Right cardiac atrium (tissue), 5 donors: ENCODE measurements at regions of chr11 and their contacts with region 1.

Region 1: GRCh38 chr11:95764267-95764898 is 25.2 kb downstream of the FAM76B start:
- DNase-seq: no peak
- ATAC-seq: peak; percentile 61 to 63
- H3K4me3 ChIP-seq: no peak overlapping the region
- H3K27ac ChIP-seq: no peak overlapping the region
- H3K4me1 ChIP-seq: no peaks in the 10 kb centered on the region
- H3K27me3 ChIP-seq: peaks cover 2% of the 10 kb centered on the region

Region 2: DNA sequence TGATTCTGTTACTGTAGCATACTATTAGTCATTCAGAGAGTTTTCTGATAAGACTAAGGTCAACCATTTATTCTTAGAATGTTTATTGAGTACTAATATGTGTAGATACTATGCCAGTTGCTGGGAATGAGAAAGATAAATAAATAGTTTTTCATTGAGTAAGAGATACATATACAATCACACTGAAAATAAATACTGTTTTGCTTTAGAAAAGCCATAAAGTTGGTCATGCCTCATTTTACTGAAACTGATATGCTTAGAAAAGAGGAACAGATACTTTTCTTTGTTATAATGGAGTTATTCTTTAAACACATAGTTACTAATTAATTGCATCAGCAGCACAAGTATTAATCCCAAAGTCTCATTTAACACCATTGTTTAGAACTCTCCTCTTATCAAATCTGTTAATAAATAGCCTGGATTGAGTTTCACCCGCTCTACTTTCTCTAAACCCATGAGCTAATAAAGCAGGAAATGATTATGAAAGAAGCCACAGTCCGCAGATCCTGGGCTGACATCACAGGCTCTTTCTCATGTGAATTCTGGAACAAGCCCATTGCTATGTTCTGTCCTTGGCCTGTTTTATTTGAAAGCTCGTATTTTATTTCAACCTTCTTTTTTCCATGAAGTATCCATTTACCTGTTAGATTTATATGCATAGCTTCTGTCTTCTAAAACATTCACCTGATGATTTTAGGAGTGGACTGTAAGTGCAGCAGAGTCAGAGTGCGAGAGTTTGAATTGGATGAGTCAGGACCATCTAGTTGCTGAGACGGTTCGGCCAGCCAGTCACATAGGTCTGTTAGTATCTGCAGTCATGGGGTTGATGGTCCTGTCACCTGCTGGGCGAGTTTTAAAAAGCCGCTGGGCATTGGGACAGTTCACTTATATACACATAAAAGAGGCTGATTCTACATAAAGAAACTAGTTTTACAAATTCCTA is 1161.7 kb before region 1 on chr11:
- intact Hi-C with region 1: no loop called
- DNase-seq: peak in 2 of 3 donors; percentile 59 to 72
- ATAC-seq: peak; percentile 71 to 91
- H3K4me3 ChIP-seq: no peak overlapping the region
- H3K27ac ChIP-seq: no peak overlapping the region
- H3K4me1 ChIP-seq: no peaks in the 10 kb centered on the region
- H3K27me3 ChIP-seq: no peaks in the 10 kb centered on the region

Region 3: GRCh38 chr11:95067039-95067840 is 697.1 kb before region 1 on chr11:
- intact Hi-C with region 1: loop called in 1 of 4 experiments (anchors 10 kb)
- DNase-seq: peak; percentile 90 to 96 (median 95)
- ATAC-seq: peak; percentile 93 to 94
- H3K4me3 ChIP-seq: peak overlapping the region; percentile 82
- H3K27ac ChIP-seq: peak overlapping the region; percentile 97
- H3K4me1 ChIP-seq: no peaks in the 10 kb centered on the region
- H3K27me3 ChIP-seq: no peaks in the 10 kb centered on the region

Region 4: GRCh38 chr11:95705485-95706124 is 58.8 kb before region 1 on chr11:
- intact Hi-C with region 1: loop called in 2 of 4 experiments (anchors 5 kb)
- DNase-seq: peak; percentile 83 to 92 (median 91)
- ATAC-seq: peak; percentile 97 to 98
- H3K4me3 ChIP-seq: no peak overlapping the region
- H3K27ac ChIP-seq: no peak overlapping the region
- H3K4me1 ChIP-seq: peaks cover 2% of the 10 kb centered on the region
- H3K27me3 ChIP-seq: no peaks in the 10 kb centered on the region